H1 (cell line): ENCODE measurements at regions of chr7 and their contacts with region 1.

Region 1: DNA sequence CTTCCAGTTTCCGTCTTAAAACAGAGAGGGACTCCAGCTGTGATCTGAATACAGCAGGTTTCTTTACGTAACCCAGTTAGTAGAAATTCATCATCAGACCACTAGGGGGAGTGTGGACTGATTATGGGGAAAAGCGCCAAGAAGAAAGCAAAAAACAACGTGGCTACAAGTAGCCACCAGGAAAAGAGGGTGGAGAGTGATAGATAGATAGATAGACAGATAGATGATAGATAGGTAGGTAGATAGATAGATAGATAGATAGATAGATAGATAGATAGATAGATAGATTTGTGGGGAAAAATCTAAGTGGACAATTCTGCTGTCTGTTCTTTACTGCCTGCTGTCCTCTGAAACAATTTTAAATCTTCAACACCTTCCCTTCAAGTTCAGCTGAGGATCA is 12.7 kb upstream of the AKR1B10 start:
- DNase-seq: no peak
- H3K4me3 ChIP-seq: no peak overlapping the region
- H3K27ac ChIP-seq: no peak overlapping the region
- H3K4me1 ChIP-seq: no peaks in the 10 kb centered on the region
- H3K27me3 ChIP-seq: peaks cover 0 to 3% (median 0%) of the 10 kb centered on the region in 4 experiments; a peak in 2 of 7 replicates
- CTCF ChIP-seq: peak in 2 of 3 experiments; percentile 71 to 72; a peak in 3 of 4 replicates
- EP300 ChIP-seq: no peak
- POLR2A ChIP-seq: no peak
- RAD21 ChIP-seq: peak; percentile 47 to 65

Region 2: DNA sequence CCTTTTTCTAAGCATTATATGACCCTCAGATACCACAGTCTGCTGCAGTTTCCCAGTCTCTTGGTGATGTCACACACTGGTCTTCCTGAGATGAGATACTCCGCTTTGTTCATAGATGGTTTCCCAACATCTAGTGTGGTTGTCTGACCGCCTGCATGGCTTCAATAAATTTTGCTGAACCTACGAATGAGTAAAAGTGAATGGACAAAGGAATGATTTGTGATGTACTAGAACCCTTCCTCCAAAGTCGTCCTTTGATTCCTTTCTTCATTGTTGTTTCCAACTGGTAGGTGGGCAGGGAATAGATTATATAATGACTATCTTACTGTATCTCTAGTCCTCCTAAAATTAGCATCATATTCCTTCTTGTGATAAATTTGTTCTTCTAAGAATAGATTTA is 280.4 kb before region 1 on chr7:
- CTCF ChIA-PET with region 1: no interaction called
- POLR2A ChIA-PET with region 1: no interaction called
- DNase-seq: no peak
- H3K4me3 ChIP-seq: no peak overlapping the region
- H3K27ac ChIP-seq: no peak overlapping the region
- H3K4me1 ChIP-seq: no peaks in the 10 kb centered on the region
- H3K27me3 ChIP-seq: no peaks in the 10 kb centered on the region
- CTCF ChIP-seq: no peak
- EP300 ChIP-seq: no peak
- POLR2A ChIP-seq: no peak
- RAD21 ChIP-seq: no peak

Region 3: GRCh38 chr7:134308548-134308947 is 206.1 kb before region 1 on chr7:
- CTCF ChIA-PET with region 1: no interaction called
- POLR2A ChIA-PET with region 1: no interaction called
- DNase-seq: no peak
- H3K4me3 ChIP-seq: no peak overlapping the region
- H3K27ac ChIP-seq: no peak overlapping the region
- H3K4me1 ChIP-seq: no peaks in the 10 kb centered on the region
- H3K27me3 ChIP-seq: no peaks in the 10 kb centered on the region
- CTCF ChIP-seq: no peak
- EP300 ChIP-seq: no peak
- POLR2A ChIP-seq: no peak
- RAD21 ChIP-seq: no peak

Region 4: GRCh38 chr7:134432296-134433152 is 82.1 kb before region 1 on chr7:
- CTCF ChIA-PET with region 1: interaction called, 108 read pairs
- POLR2A ChIA-PET with region 1: interaction called, 4 read pairs
- DNase-seq: peak; percentile 73 to 84
- H3K4me3 ChIP-seq: peak overlapping the region; percentile 38 to 68 (median 58); a peak in 7 of 8 replicates
- H3K27ac ChIP-seq: no peak overlapping the region
- H3K4me1 ChIP-seq: peaks cover 0 to 2% (median under 1%) of the 10 kb centered on the region in 4 experiments; a peak in 1 of 7 replicates
- H3K27me3 ChIP-seq: no peaks in the 10 kb centered on the region; a peak in 2 of 7 replicates
- CTCF ChIP-seq: peak; percentile 55 to 89 (median 86)
- EP300 ChIP-seq: no peak
- POLR2A ChIP-seq: no peak; a peak in 1 of 3 replicates
- RAD21 ChIP-seq: peak; percentile 94 to 95

Region 5: GRCh38 chr7:134448700-134449229 is 65.9 kb before region 1 on chr7:
- CTCF ChIA-PET with region 1: interaction called, 39 read pairs
- POLR2A ChIA-PET with region 1: interaction called, 3 read pairs
- DNase-seq: no peak
- H3K4me3 ChIP-seq: no peak overlapping the region
- H3K27ac ChIP-seq: no peak overlapping the region
- H3K4me1 ChIP-seq: no peaks in the 10 kb centered on the region; a peak in 1 of 7 replicates
- H3K27me3 ChIP-seq: no peaks in the 10 kb centered on the region
- CTCF ChIP-seq: no peak
- EP300 ChIP-seq: no peak
- POLR2A ChIP-seq: no peak
- RAD21 ChIP-seq: no peak

Region 6: DNA sequence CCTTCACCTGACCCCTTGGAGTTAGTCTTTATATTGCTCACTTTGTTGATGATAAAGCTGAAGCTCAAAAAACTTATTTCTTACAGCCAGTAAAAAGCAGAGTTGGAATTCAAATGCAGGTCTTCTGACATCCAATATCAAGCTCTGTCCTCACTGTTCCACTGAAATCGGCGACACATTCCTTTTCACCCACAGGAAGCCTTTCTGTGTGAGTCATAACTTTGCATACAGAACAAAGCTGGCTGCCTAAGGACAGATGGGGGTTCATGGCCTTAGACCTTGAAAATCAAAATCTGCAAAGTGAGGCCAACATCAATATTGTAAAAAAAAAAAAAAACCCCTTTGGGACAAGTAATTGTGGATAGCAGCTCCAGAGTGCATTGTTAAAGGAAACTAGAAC is 33.9 kb before region 1 on chr7:
- CTCF ChIA-PET with region 1: interaction called, 15 read pairs
- POLR2A ChIA-PET with region 1: no interaction called
- DNase-seq: no peak
- H3K4me3 ChIP-seq: no peak overlapping the region
- H3K27ac ChIP-seq: no peak overlapping the region
- H3K4me1 ChIP-seq: no peaks in the 10 kb centered on the region
- H3K27me3 ChIP-seq: no peaks in the 10 kb centered on the region
- CTCF ChIP-seq: no peak
- EP300 ChIP-seq: no peak
- POLR2A ChIP-seq: no peak
- RAD21 ChIP-seq: no peak

Region 7: DNA sequence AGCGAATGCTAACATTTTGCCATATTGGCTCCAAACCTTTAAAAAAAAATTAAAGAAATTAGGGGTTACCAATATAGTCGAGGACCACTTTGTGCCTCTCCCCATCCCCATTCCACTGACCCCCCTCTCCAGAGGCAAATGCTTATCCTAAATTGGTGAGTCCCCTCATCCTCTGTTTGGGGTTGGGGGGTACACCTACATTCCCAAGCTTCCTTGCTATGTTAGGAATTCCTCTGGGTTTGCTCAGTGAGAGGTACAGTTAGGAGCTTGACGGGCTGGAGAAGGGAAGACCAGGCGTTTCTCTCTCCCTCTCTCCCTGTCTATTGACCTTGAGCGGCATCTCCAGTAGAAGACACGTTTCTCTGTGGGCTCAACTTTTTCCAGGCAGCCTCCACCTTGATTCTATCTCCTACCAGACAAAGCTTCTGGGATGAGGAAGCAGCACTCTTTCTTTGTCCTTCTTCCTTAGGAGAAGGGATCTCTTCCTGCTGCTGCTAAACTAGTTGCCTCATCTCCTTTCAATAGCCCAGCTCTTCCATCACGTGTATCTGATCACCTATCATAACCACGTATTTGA is 27.6 kb after region 1 on chr7:
- CTCF ChIA-PET with region 1: interaction called, 33 read pairs
- POLR2A ChIA-PET with region 1: no interaction called
- DNase-seq: no peak
- H3K4me3 ChIP-seq: no peak overlapping the region
- H3K27ac ChIP-seq: no peak overlapping the region
- H3K4me1 ChIP-seq: peaks cover 4 to 8% (median 8%) of the 10 kb centered on the region in 4 experiments
- H3K27me3 ChIP-seq: no peaks in the 10 kb centered on the region
- CTCF ChIP-seq: no peak
- EP300 ChIP-seq: no peak
- POLR2A ChIP-seq: no peak
- RAD21 ChIP-seq: no peak

Region 8: DNA sequence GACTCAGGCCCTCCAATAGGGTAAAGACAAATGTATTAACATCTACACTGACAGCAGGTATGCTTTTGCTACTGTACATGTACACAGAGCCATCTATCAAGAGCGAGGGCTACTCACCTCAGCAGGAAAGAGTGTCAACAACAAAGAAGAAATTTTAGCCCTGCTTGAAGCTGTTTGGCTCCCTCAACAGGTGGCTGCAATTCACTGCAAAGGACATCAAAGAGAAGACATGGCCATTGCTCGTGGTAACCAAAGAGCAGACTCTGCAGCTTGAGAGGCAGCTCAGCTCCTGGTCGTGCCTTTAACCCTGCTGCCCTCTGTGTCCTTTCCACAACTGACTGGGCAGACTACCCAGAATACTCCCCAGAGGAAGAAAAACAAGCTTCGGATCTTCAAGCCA is 39.3 kb after region 1 on chr7:
- CTCF ChIA-PET with region 1: interaction called, 33 read pairs
- POLR2A ChIA-PET with region 1: no interaction called
- DNase-seq: no peak
- H3K4me3 ChIP-seq: no peak overlapping the region
- H3K27ac ChIP-seq: no peak overlapping the region
- H3K4me1 ChIP-seq: no peaks in the 10 kb centered on the region; a peak in 1 of 7 replicates
- H3K27me3 ChIP-seq: no peaks in the 10 kb centered on the region
- CTCF ChIP-seq: peak; percentile 20 to 64 (median 35); a peak in 3 of 4 replicates
- EP300 ChIP-seq: no peak
- POLR2A ChIP-seq: no peak
- RAD21 ChIP-seq: peak; percentile 49 to 56

Region 9: DNA sequence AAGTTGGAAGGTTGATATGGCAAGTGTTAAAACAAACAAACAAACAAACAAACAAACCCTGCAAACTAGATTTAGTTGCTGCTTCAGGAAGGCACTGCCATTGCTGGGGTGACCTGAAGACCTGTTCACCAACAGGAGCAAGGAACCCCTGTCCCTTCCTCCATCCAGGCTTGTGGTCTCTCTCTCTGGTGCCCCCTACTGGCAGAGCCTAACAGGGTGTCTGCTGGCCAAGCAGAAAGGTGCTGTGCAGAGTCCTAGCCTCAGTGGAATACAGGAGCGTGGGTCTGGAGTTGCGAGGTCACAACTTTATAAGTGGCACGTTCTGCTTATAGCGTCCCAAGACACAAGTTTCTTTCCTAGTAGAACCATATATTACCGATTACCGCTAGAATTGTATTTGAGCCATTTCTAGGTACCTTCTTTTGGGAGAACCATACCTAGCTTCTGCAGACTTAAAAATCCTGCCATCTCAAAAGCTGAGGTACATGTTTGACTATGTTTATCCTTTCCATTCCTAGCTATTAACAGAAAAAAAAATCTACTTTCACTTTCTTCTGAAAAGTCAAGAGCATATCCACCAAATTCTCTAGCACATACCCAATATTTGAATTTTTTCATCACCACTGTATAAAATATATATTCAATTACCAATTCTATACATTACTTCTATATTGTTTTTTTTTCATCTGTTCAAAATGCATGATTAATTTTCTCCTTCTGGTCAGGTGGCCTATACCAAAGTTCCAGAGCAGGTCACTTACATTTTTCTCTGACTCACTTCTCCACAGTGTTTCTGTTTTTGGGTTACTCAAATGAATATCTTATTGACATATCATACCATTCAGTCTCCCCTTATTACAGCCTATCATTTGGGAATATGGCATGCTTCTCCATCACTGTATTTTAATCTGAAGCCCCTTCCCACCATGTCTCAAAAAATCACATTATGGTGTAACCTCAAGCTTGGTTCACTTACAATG is 235.7 kb after region 1 on chr7:
- CTCF ChIA-PET with region 1: no interaction called
- POLR2A ChIA-PET with region 1: no interaction called
- DNase-seq: peak; percentile 50 to 89
- H3K4me3 ChIP-seq: no peak overlapping the region
- H3K27ac ChIP-seq: no peak overlapping the region
- H3K4me1 ChIP-seq: no peaks in the 10 kb centered on the region; a peak in 2 of 7 replicates
- H3K27me3 ChIP-seq: no peaks in the 10 kb centered on the region
- CTCF ChIP-seq: peak; percentile 83 to 97 (median 85)
- EP300 ChIP-seq: no peak
- POLR2A ChIP-seq: no peak
- RAD21 ChIP-seq: peak; percentile 73 to 84